ENCODE measurements at regions of chr18 and their contacts with region 1.

Region 1: GRCh38 chr18:60775978-60776377 is 403.4 kb upstream of the MC4R start:
- DNase-seq: no peak
- ATAC-seq: no peak
- H3K4me3 ChIP-seq: no peak overlapping the region
- H3K27ac ChIP-seq: no peak overlapping the region
- H3K4me1 ChIP-seq: no peaks in the 10 kb centered on the region
- H3K27me3 ChIP-seq: no peaks in the 10 kb centered on the region
- CTCF ChIP-seq: no peak
- EP300 ChIP-seq: no peak
- POLR2A ChIP-seq: no peak
- RAD21 ChIP-seq: no peak

Region 2: DNA sequence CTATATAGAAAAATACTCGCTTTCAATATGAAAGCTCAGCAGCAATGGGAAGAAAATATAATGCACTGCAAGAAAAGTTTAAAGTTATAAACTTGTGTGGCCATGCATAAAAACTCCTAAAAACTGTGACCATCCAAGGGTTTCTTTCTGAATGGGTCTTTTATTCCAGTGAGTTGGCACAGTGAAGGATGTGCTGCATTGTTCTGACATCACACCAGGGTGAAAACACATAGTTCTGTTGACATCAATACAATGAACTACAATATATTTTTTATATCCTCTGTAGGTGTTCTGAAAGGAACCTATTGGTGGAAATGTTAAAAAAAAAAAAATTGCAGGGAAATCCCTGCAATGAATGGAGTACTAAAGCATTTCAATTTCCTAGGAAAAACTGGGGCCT is 637.4 kb after region 1 on chr18:
- CTCF ChIA-PET with region 1: no interaction called
- POLR2A ChIA-PET with region 1: no interaction called
- in situ Hi-C with region 1: no loop called
- intact Hi-C with region 1: loop called (anchors 10 kb)
- DNase-seq: no peak
- ATAC-seq: no peak
- H3K4me3 ChIP-seq: no peak overlapping the region
- H3K27ac ChIP-seq: no peak overlapping the region
- H3K4me1 ChIP-seq: no peaks in the 10 kb centered on the region
- H3K27me3 ChIP-seq: no peaks in the 10 kb centered on the region
- CTCF ChIP-seq: no peak
- EP300 ChIP-seq: no peak
- POLR2A ChIP-seq: no peak
- RAD21 ChIP-seq: no peak